ENCODE measurements at regions of chr1 and their contacts with region 1.

Region 1: DNA sequence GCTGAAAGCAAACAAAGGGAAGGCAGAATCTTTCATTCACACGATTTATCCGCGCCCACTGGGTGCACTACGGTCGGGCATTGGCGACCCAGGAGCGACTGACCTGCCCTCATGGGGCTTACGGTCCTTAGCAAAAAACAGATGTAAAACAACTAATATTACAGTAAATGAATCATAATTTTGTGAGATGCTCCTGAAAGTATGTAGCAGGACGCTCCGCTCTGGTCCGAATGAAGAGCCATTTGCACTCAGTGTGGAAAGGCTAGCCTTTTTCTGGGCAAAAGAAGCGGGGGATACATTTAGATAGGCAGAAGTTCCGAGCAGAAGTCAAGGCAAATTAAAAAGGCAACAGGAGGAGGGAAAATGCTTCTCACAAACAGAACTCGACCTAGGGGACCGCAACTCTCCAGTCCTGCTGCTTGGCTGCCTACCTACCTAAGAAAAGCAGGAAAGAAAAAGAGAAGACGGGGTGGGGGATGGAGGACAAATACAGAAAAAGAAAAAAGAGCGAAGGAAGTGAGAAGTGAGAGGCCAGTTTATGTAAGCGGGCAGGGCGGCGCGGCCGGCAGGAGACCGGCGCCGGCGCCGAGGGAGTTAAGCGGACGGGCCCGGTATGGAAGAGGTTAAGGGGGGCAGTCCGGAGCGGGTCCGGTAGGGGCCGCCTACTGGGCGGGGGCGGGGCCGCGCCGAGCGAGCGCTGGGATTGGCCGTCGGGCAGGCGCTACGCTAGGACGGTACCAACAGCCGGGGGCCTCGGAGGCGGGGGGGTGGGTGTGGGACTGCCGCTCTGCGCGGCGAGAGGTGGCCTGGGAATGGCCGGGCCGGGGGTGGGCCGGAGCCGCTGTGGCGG is at the start of gene FAM20B:
- DNase-seq: peak; percentile 79 to 95 (median 90)
- ATAC-seq: peak; percentile 85
- H3K4me3 ChIP-seq: peak within 1 kb of the TSS; percentile 76
- H3K4me3 Mint-ChIP-seq: peak within 1 kb of the TSS; percentile 89
- H3K27ac ChIP-seq: peak within 1 kb of the TSS; percentile 46 to 51
- H3K27ac Mint-ChIP-seq: peak within 1 kb of the TSS; percentile 76
- H3K4me1 ChIP-seq: peaks cover 17% of the 10 kb centered on the region
- H3K4me1 Mint-ChIP-seq: peaks cover 48% of the 10 kb centered on the region
- H3K27me3 ChIP-seq: no peaks in the 10 kb centered on the region
- H3K27me3 Mint-ChIP-seq: no peaks in the 10 kb centered on the region
- CTCF ChIP-seq: no peak
- total RNA-seq, gene FAM20B: 12.1 to 12.9 TPM

Region 2: DNA sequence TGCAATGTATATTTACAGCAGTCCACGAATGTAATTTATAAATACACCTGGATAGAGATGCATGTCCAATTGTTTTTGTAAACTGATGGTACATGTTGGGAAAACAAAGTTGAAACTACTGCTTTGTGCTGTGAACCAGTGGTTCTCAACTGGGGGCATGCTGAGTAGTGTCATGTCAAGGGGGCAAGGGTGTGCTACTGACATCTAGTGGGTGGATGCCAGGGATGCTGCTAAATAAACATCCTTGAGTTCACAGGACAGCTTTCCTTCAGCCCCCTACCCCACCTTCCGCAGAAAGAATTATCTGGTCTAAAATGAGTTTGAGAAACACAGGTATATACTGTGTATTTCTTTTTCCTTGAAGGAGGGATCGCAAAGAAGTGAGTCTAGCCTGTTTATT is 835.5 kb before region 1 on chr1:
- CTCF ChIA-PET with region 1: no interaction called
- POLR2A ChIA-PET with region 1: no interaction called
- intact Hi-C with region 1: no loop called
- DNase-seq: peak in 1 of 14 experiments; percentile 1
- ATAC-seq: no peak
- H3K4me3 ChIP-seq: no peak overlapping the region
- H3K4me3 Mint-ChIP-seq: no peak overlapping the region
- H3K27ac ChIP-seq: no peak overlapping the region
- H3K27ac Mint-ChIP-seq: no peak overlapping the region
- H3K4me1 ChIP-seq: no peaks in the 10 kb centered on the region
- H3K4me1 Mint-ChIP-seq: no peaks in the 10 kb centered on the region
- H3K27me3 ChIP-seq: no peaks in the 10 kb centered on the region
- H3K27me3 Mint-ChIP-seq: no peaks in the 10 kb centered on the region
- CTCF ChIP-seq: no peak

Region 3: DNA sequence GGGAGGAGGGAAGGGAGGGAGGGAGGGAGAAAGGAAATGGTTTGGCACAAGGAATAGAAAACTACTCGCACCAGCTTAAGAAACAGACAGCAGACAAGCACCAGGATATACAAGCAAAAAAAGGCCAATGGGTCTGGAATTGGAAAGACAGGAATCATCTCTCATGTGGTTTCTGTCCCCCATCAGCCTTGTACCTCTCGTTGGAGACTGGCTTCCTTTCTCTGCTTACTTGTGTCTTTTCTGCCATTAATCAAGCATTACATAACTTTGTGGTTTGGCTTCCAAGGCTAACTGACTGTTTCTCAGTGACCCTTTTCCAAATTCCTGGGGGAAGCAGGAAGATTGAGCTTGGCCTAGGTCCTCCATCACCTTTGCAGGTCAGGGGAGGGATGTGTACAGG is 312.1 kb before region 1 on chr1:
- CTCF ChIA-PET with region 1: no interaction called
- POLR2A ChIA-PET with region 1: no interaction called
- intact Hi-C with region 1: no loop called
- DNase-seq: no peak
- ATAC-seq: no peak
- H3K4me3 ChIP-seq: no peak overlapping the region
- H3K4me3 Mint-ChIP-seq: no peak overlapping the region
- H3K27ac ChIP-seq: no peak overlapping the region
- H3K27ac Mint-ChIP-seq: no peak overlapping the region
- H3K4me1 ChIP-seq: no peaks in the 10 kb centered on the region
- H3K4me1 Mint-ChIP-seq: no peaks in the 10 kb centered on the region
- H3K27me3 ChIP-seq: peaks cover 0 to 7% of the 10 kb centered on the region in 2 experiments
- H3K27me3 Mint-ChIP-seq: peaks cover 19% of the 10 kb centered on the region
- CTCF ChIP-seq: no peak

Region 4: DNA sequence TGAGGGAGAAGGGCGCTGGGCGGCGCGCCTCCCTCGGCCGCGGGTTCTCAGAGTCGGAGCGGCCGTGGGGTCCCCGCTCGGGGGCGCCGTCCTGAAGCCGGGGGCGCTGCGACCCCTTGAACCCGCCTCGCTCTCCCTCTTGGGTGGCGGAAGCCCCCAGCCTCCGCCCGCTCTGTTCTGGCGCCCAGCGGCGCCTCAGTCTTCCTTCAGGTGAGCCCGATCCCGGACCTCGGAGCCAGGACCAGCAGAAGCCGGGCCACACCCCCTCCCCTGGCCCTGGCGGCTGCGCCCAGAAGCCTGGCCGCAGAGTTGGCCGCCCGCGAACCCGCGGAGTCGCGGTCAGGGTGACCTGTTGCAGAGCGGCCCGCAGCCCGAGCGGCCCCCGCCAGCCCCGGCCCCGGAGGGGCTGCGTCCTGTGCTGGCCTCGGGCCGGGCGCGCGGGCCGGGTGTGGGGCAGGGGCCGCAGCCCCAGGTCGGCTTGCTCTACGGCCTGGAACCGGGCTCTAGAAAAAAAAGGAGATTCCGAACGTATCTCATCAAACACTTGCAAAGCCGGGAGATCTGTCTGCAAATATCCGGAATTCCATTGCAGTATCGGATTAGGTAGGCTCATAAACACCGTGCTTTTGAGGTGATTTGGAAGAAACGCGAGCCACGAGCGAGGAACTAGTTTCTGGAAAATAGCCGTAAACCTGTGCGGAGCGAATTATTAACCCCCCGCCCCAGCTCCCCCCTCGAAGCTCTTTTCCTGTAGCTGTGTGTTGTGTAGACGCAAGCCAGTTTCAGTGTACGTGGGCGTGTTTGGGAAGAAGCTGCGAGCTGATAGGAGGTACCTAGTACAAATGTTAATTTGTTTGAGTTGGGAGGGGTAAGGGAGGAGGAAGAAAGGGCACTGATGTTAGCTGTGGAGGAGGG is 299.5 kb before region 1 on chr1:
- CTCF ChIA-PET with region 1: no interaction called
- POLR2A ChIA-PET with region 1: no interaction called
- intact Hi-C with region 1: loop called in 1 of 2 experiments (anchors 2 kb)
- DNase-seq: peak; percentile 23 to 85 (median 57)
- ATAC-seq: peak; percentile 84
- H3K4me3 ChIP-seq: peak overlapping the region; percentile 71
- H3K4me3 Mint-ChIP-seq: peak overlapping the region; percentile 93
- H3K27ac ChIP-seq: peak overlapping the region in 1 of 2 donors; percentile 29
- H3K27ac Mint-ChIP-seq: peak overlapping the region; percentile 87
- H3K4me1 ChIP-seq: peaks cover 9% of the 10 kb centered on the region
- H3K4me1 Mint-ChIP-seq: peaks cover 39% of the 10 kb centered on the region
- H3K27me3 ChIP-seq: no peaks in the 10 kb centered on the region
- H3K27me3 Mint-ChIP-seq: no peaks in the 10 kb centered on the region
- CTCF ChIP-seq: no peak

Region 5: GRCh38 chr1:179229214-179230140 is 204.1 kb after region 1 on chr1 and contains the start of gene ABL2:
- CTCF ChIA-PET with region 1: no interaction called
- POLR2A ChIA-PET with region 1: no interaction called
- intact Hi-C with region 1: loop called in 1 of 2 experiments (anchors 5 kb)
- DNase-seq: peak; percentile 11 to 74 (median 45)
- ATAC-seq: peak; percentile 63
- H3K4me3 ChIP-seq: peak within 1 kb of the TSS; percentile 57
- H3K4me3 Mint-ChIP-seq: peak within 1 kb of the TSS; percentile 98
- H3K27ac ChIP-seq: peak within 1 kb of the TSS in 1 of 2 donors; percentile 57
- H3K27ac Mint-ChIP-seq: peak within 1 kb of the TSS; percentile 82
- H3K4me1 ChIP-seq: peaks cover 11% of the 10 kb centered on the region
- H3K4me1 Mint-ChIP-seq: peaks cover 35% of the 10 kb centered on the region
- H3K27me3 ChIP-seq: no peaks in the 10 kb centered on the region
- H3K27me3 Mint-ChIP-seq: no peaks in the 10 kb centered on the region
- CTCF ChIP-seq: no peak
- total RNA-seq, gene ABL2: 15.8 to 16.4 TPM

Region 6: GRCh38 chr1:179954493-179955297 is 929.3 kb after region 1 on chr1 and contains the start of gene CEP350:
- CTCF ChIA-PET with region 1: no interaction called
- POLR2A ChIA-PET with region 1: no interaction called
- intact Hi-C with region 1: loop called in 1 of 2 experiments (anchors 5 kb)
- DNase-seq: peak; percentile 95 to 100 (median 97)
- ATAC-seq: peak; percentile 84
- H3K4me3 ChIP-seq: peak within 1 kb of the TSS; percentile 87
- H3K4me3 Mint-ChIP-seq: peak within 1 kb of the TSS; percentile 96
- H3K27ac ChIP-seq: peak within 1 kb of the TSS; percentile 82 to 90
- H3K27ac Mint-ChIP-seq: peak within 1 kb of the TSS; percentile 94
- H3K4me1 ChIP-seq: peaks cover 23% of the 10 kb centered on the region
- H3K4me1 Mint-ChIP-seq: peaks cover 71% of the 10 kb centered on the region
- H3K27me3 ChIP-seq: no peaks in the 10 kb centered on the region
- H3K27me3 Mint-ChIP-seq: no peaks in the 10 kb centered on the region
- CTCF ChIP-seq: no peak
- total RNA-seq, gene CEP350: 45.5 to 51.4 TPM

Region 7: GRCh38 chr1:180154325-180155181 is 1129.2 kb after region 1 on chr1 and contains the start of gene QSOX1:
- CTCF ChIA-PET with region 1: no interaction called
- POLR2A ChIA-PET with region 1: no interaction called
- intact Hi-C with region 1: loop called in 1 of 2 experiments (anchors 10 kb)
- DNase-seq: peak; percentile 80 to 97 (median 86)
- ATAC-seq: peak; percentile 97
- H3K4me3 ChIP-seq: peak within 1 kb of the TSS; percentile 90
- H3K4me3 Mint-ChIP-seq: peak within 1 kb of the TSS; percentile 95
- H3K27ac ChIP-seq: peak within 1 kb of the TSS; percentile 19 to 42
- H3K27ac Mint-ChIP-seq: peak within 1 kb of the TSS; percentile 82
- H3K4me1 ChIP-seq: peaks cover 27% of the 10 kb centered on the region
- H3K4me1 Mint-ChIP-seq: peaks cover 33% of the 10 kb centered on the region
- H3K27me3 ChIP-seq: no peaks in the 10 kb centered on the region
- H3K27me3 Mint-ChIP-seq: no peaks in the 10 kb centered on the region
- CTCF ChIP-seq: no peak
- total RNA-seq, gene QSOX1: 13.7 to 14.3 TPM

Region 8: DNA sequence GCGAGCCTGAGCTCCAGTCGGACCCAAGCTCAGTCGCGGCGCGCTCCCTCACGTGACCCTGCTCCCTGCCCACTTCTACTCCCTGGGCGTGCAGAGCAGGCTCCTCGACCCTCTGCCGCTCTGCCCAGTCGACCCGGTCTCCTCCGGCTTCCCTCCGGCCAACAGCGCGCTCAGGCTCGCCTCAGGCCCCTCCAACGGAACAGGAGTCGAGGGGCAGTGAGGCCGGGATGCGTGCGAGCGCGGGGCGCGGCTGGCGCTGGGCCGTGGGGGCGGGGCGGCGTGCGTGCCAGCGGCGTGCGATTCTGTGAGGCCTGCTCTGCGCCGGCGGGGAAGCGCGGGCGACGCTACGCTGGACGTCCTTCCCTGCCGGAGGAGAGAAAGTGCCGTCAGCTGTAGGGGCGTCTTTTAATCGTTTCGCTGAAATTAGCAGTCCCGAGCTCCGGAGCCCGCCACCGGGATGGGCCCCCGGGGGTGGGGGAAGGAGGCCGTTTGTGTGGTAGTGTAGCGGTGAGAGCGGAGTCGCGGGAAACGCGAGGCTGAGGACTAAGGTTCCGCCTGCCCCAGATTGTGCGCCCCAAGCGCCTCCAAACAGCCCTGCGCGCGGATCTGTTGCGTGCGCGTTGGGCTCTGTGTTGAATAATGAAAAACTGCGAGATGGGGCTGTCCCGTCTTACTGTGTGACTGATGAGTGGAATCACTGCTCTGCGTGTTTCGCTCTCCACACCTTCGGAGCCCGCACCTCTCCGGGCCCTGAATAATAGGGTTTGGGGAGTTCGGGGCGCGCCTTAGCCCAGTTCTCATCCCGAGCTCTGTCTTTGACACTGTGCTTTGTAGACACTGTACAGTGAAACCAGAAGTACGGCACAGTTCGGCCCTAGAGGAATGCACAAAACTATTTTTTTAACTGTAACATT is 1477.3 kb after region 1 on chr1 and contains the start of gene ACBD6:
- CTCF ChIA-PET with region 1: no interaction called
- POLR2A ChIA-PET with region 1: no interaction called
- intact Hi-C with region 1: loop called in 1 of 2 experiments (anchors 5 kb)
- DNase-seq: peak; percentile 76 to 94 (median 83)
- ATAC-seq: peak; percentile 90
- H3K4me3 ChIP-seq: peak within 1 kb of the TSS; percentile 98
- H3K4me3 Mint-ChIP-seq: peak within 1 kb of the TSS; percentile 92
- H3K27ac ChIP-seq: peak within 1 kb of the TSS; percentile 74 to 85
- H3K27ac Mint-ChIP-seq: peak within 1 kb of the TSS; percentile 94
- H3K4me1 ChIP-seq: peaks cover 23% of the 10 kb centered on the region
- H3K4me1 Mint-ChIP-seq: peaks cover 43% of the 10 kb centered on the region
- H3K27me3 ChIP-seq: no peaks in the 10 kb centered on the region
- H3K27me3 Mint-ChIP-seq: no peaks in the 10 kb centered on the region
- CTCF ChIP-seq: no peak
- total RNA-seq, gene ACBD6: 28.2 to 28.8 TPM